ENCODE measurements at regions of chr4 and their contacts with region 1.

Region 1: GRCh38 chr4:55530691-55531090 is 16.0 kb downstream of the CLOCK start:
- DNase-seq: no peak
- ATAC-seq: no peak
- H3K4me3 ChIP-seq: no peak overlapping the region
- H3K4me3 Mint-ChIP-seq: no peak overlapping the region
- H3K27ac ChIP-seq: no peak overlapping the region
- H3K27ac Mint-ChIP-seq: no peak overlapping the region
- H3K4me1 ChIP-seq: no peaks in the 10 kb centered on the region
- H3K4me1 Mint-ChIP-seq: peaks cover 0 to 28% (median 16%) of the 10 kb centered on the region in 7 donors
- H3K27me3 ChIP-seq: no peaks in the 10 kb centered on the region
- H3K27me3 Mint-ChIP-seq: no peaks in the 10 kb centered on the region

Region 2: DNA sequence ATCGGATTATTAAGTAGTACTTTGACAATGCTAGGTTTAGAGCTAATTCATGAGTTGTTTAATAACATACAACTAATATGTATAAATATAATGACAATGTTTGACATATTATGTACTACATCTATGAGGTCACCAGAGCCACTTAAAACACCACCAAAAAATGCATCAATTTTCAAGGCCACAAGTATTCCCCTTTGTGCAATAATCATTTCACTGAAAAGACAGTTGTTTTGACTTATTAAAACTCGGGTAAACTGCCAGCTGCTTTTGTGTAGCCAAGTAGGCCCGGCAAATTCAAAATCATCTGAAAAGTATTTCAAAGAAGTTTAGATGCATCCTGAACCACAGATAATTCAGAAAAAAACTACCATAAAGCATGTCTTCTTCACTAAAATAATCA is 32.6 kb before region 1 on chr4:
- CTCF ChIA-PET with region 1: interaction called, 5 read pairs
- POLR2A ChIA-PET with region 1: no interaction called
- intact Hi-C with region 1: loop called in 1 of 2 experiments (anchors 5 kb)
- DNase-seq: no peak
- ATAC-seq: no peak
- H3K4me3 ChIP-seq: no peak overlapping the region
- H3K4me3 Mint-ChIP-seq: no peak overlapping the region
- H3K27ac ChIP-seq: no peak overlapping the region
- H3K27ac Mint-ChIP-seq: no peak overlapping the region
- H3K4me1 ChIP-seq: no peaks in the 10 kb centered on the region
- H3K4me1 Mint-ChIP-seq: peaks cover 2 to 16% (median 6%) of the 10 kb centered on the region in 7 donors
- H3K27me3 ChIP-seq: no peaks in the 10 kb centered on the region
- H3K27me3 Mint-ChIP-seq: no peaks in the 10 kb centered on the region